GM10248 (cell line): ENCODE measurements at regions of chr15 and their contacts with region 1.

Region 1: GRCh38 chr15:93030430-93031105 is 58.4 kb downstream of the RGMA start:
- DNase-seq: peak; percentile 87
- CTCF ChIP-seq: peak; percentile 81

Region 2: DNA sequence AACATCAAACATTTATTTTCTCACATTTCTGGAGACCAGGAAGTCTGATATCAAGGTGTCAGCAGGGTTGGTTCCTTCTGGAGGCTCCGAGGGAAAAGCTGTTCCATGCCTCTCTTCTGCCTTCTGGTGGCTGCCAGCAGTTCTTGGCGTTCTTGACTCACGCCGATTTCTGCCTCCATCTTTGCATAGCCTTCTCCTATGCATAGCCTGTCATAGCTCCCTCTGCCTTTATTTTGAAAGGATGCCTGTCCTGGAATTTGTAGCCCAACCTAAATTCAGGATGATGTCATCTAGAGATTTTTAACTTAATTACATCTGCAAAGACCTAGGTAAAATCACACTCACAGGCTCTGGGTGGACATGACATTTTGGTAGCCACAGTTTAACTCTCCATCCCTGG is 12.0 kb before region 1 on chr15:
- CTCF ChIA-PET with region 1: interaction called, 20 read pairs
- POLR2A ChIA-PET with region 1: interaction called, 3 read pairs
- DNase-seq: no peak
- CTCF ChIP-seq: no peak